Transverse colon (tissue), 4 donors: ENCODE measurements at regions of chr1 and their contacts with region 1.

Region 1: GRCh38 chr1:154442006-154442740 is 37.0 kb downstream of the IL6R start:
- DNase-seq: no peak
- H3K4me3 ChIP-seq: no peak overlapping the region
- H3K27ac ChIP-seq: peak overlapping the region in 2 of 4 donors; percentile 32 to 42
- H3K4me1 ChIP-seq: peaks cover 8 to 68% (median 32%) of the 10 kb centered on the region in 4 donors
- H3K27me3 ChIP-seq: no peaks in the 10 kb centered on the region
- CTCF ChIP-seq: peak; percentile 14 to 27 (median 18)
- EP300 ChIP-seq: no peak
- POLR2A ChIP-seq: no peak

Region 2: GRCh38 chr1:154404984-154405761 is 37.0 kb before region 1 on chr1 and contains the start of gene IL6R:
- in situ Hi-C with region 1: no loop called
- intact Hi-C with region 1: loop called (anchors 5 kb)
- DNase-seq: peak; percentile 94
- H3K4me3 ChIP-seq: peak within 1 kb of the TSS; percentile 74 to 82 (median 78)
- H3K27ac ChIP-seq: peak within 1 kb of the TSS; percentile 95 to 99 (median 99)
- H3K4me1 ChIP-seq: peaks cover 30 to 52% (median 40%) of the 10 kb centered on the region in 4 donors
- H3K27me3 ChIP-seq: no peaks in the 10 kb centered on the region
- CTCF ChIP-seq: peak; percentile 19 to 68 (median 61)
- EP300 ChIP-seq: peak; percentile 27
- POLR2A ChIP-seq: peak; percentile 84
- total RNA-seq, gene IL6R: 10.7 to 107 (median 77.3) TPM